ENCODE measurements at regions of chr6 and their contacts with region 1.

Region 1: DNA sequence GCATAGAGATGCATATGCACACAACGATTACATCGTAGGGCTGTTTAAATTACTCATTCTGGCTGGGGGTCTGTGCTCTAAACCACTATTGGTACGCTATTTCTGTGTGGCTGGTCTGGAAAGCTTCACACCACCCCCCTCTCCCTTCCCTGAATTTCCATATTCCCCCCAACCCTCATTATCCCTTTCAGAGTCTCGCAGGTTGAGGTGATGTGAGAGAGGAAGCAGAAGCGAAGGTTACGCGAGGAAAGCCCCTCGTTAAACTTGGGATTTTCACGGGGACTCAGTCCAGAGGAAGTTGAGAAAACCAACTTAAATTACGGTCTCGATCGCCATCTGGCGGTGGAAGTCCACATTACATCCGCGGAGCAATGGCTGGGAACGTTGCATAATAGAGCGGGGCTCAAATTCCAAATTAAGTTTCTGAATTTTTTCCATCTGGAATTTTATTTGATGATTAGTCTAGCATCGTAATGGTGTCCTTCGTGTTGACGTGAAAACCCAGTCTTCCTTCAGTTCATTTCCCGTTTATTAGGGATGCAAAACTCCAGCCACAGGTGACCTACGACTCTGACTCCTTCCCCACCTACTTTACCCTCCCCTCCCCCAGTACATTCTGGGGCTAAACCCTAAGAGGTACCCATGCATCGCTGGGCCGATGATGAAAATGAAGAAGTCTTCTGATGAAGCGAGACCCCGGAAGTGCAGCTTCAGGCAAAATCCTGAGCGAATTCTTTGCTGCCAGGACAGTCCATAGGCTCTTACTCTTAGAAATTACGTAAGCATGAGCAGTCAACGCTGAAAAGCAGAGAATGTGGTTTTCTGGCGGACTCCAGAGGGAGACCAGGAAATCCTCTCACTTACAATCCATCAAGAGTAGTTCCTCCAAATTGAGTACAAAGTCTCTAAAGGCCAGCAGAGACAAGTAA is 19.7 kb downstream of the HLA-DOB start:
- DNase-seq: peak; percentile 60 to 88 (median 81)
- ATAC-seq: peak; percentile 79
- H3K4me3 ChIP-seq: peak overlapping the region in 1 of 2 experiments; percentile 33
- H3K4me3 Mint-ChIP-seq: peak overlapping the region; percentile 64
- H3K27ac ChIP-seq: no peak overlapping the region
- H3K27ac Mint-ChIP-seq: no peak overlapping the region
- H3K4me1 ChIP-seq: peaks cover 17% of the 10 kb centered on the region
- H3K4me1 Mint-ChIP-seq: peaks cover 27% of the 10 kb centered on the region
- H3K27me3 ChIP-seq: peaks cover 0 to 6% of the 10 kb centered on the region in 2 experiments
- H3K27me3 Mint-ChIP-seq: peaks cover 36% of the 10 kb centered on the region
- CTCF ChIP-seq: peak; percentile 97

Region 2: GRCh38 chr6:31729515-31729978 is 1067.6 kb before region 1 on chr6:
- CTCF ChIA-PET with region 1: no interaction called
- POLR2A ChIA-PET with region 1: no interaction called
- intact Hi-C with region 1: no loop called
- DNase-seq: peak; percentile 60 to 89 (median 83)
- ATAC-seq: peak; percentile 69
- H3K4me3 ChIP-seq: peak overlapping the region; percentile 79 to 96
- H3K4me3 Mint-ChIP-seq: peak overlapping the region; percentile 97
- H3K27ac ChIP-seq: peak overlapping the region; percentile 11 to 58
- H3K27ac Mint-ChIP-seq: peak overlapping the region; percentile 89
- H3K4me1 ChIP-seq: peaks cover 35% of the 10 kb centered on the region
- H3K4me1 Mint-ChIP-seq: peaks cover 57% of the 10 kb centered on the region
- H3K27me3 ChIP-seq: no peaks in the 10 kb centered on the region
- H3K27me3 Mint-ChIP-seq: no peaks in the 10 kb centered on the region
- CTCF ChIP-seq: peak; percentile 91

Region 3: GRCh38 chr6:32047850-32048766 is 749.0 kb before region 1 on chr6:
- CTCF ChIA-PET with region 1: no interaction called
- POLR2A ChIA-PET with region 1: no interaction called
- intact Hi-C with region 1: loop called in 1 of 2 experiments (anchors 10 kb)
- DNase-seq: peak; percentile 39 to 81 (median 71)
- ATAC-seq: peak; percentile 78
- H3K4me3 ChIP-seq: no peak overlapping the region
- H3K4me3 Mint-ChIP-seq: peak overlapping the region; percentile 26
- H3K27ac ChIP-seq: no peak overlapping the region
- H3K27ac Mint-ChIP-seq: no peak overlapping the region
- H3K4me1 ChIP-seq: no peaks in the 10 kb centered on the region
- H3K4me1 Mint-ChIP-seq: peaks cover 4% of the 10 kb centered on the region
- H3K27me3 ChIP-seq: no peaks in the 10 kb centered on the region
- H3K27me3 Mint-ChIP-seq: no peaks in the 10 kb centered on the region
- CTCF ChIP-seq: peak; percentile 93

Region 4: DNA sequence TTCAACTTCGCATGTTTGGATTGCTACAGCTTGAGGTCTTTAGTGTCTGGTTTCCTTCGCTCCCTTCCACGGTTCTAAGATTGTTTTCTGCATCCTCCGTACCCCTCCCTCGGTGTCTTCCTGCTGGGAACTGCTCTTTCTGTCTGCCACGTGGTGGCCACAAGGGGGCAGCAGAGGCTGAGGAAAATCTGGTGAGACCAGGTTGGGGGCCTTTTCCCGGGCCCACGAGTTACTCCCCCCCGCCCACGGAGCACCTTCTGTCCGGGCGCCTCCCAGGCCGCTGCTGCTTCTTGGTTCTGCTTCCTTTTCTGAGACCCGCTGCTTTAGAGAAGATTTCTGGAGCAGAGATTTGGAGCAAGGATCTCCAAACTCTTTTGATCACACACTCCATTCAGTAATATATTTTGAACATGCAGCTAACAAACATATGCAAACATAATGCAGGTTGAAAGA is 552.1 kb before region 1 on chr6:
- CTCF ChIA-PET with region 1: interaction called, 3 read pairs
- POLR2A ChIA-PET with region 1: no interaction called
- intact Hi-C with region 1: loop called (anchors 2 to 10 kb)
- DNase-seq: peak; percentile 38 to 83 (median 75)
- ATAC-seq: peak; percentile 69
- H3K4me3 ChIP-seq: peak overlapping the region in 1 of 2 experiments; percentile 18
- H3K4me3 Mint-ChIP-seq: peak overlapping the region; percentile 44
- H3K27ac ChIP-seq: no peak overlapping the region
- H3K27ac Mint-ChIP-seq: no peak overlapping the region
- H3K4me1 ChIP-seq: peaks cover 5% of the 10 kb centered on the region
- H3K4me1 Mint-ChIP-seq: peaks cover 5% of the 10 kb centered on the region
- H3K27me3 ChIP-seq: no peaks in the 10 kb centered on the region
- H3K27me3 Mint-ChIP-seq: peaks cover 2% of the 10 kb centered on the region
- CTCF ChIP-seq: peak; percentile 94

Region 5: DNA sequence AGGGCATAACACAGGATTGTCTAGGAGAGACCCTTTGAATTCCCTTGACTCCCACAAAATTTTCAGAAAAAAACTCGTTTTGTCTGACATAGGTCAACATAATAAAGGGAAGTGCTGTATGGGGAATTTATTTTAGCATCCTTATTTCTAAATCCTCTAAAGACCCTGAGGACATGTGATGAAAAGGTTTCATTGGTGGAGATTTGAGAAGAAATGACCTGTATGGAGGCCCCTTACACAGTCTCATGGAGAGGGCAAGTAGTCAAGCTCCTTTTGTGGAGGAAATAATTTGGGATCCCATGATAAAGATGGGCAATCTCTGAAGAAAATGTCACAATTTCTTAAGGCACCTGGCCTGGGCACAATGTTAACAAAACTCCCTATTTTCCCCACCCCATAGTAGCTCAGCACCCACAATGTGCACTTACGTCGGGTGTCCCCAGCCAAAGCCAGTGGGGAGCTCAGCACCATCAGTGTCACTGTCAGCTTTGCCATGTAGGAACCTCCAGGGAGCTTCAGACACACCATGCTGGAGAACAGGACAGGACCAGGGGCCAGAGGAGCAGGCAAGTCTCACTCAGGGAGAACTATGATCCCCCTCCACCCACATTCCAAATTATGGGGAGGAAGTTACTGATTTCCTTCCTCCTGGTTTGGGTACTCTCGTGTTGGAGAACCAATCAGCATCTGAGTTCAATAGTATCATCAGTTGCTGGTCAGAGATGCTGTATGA is 267.2 kb before region 1 on chr6 and contains the start of gene HLA-DRB5:
- CTCF ChIA-PET with region 1: no interaction called
- POLR2A ChIA-PET with region 1: no interaction called
- intact Hi-C with region 1: no loop called
- DNase-seq: peak in 3 of 9 experiments; percentile 4 to 61 (median 51)
- ATAC-seq: peak; percentile 66
- H3K4me3 ChIP-seq: peak within 1 kb of the TSS in 1 of 2 experiments; percentile 50
- H3K4me3 Mint-ChIP-seq: peak within 1 kb of the TSS; percentile 78
- H3K27ac ChIP-seq: peak within 1 kb of the TSS in 1 of 2 experiments; percentile 56
- H3K27ac Mint-ChIP-seq: peak within 1 kb of the TSS; percentile 32
- H3K4me1 ChIP-seq: no peaks in the 10 kb centered on the region
- H3K4me1 Mint-ChIP-seq: peaks cover 5% of the 10 kb centered on the region
- H3K27me3 ChIP-seq: no peaks in the 10 kb centered on the region
- H3K27me3 Mint-ChIP-seq: peaks cover 4% of the 10 kb centered on the region
- CTCF ChIP-seq: no peak
- total RNA-seq, gene HLA-DRB5: 9.3 to 10.1 TPM

Region 6: DNA sequence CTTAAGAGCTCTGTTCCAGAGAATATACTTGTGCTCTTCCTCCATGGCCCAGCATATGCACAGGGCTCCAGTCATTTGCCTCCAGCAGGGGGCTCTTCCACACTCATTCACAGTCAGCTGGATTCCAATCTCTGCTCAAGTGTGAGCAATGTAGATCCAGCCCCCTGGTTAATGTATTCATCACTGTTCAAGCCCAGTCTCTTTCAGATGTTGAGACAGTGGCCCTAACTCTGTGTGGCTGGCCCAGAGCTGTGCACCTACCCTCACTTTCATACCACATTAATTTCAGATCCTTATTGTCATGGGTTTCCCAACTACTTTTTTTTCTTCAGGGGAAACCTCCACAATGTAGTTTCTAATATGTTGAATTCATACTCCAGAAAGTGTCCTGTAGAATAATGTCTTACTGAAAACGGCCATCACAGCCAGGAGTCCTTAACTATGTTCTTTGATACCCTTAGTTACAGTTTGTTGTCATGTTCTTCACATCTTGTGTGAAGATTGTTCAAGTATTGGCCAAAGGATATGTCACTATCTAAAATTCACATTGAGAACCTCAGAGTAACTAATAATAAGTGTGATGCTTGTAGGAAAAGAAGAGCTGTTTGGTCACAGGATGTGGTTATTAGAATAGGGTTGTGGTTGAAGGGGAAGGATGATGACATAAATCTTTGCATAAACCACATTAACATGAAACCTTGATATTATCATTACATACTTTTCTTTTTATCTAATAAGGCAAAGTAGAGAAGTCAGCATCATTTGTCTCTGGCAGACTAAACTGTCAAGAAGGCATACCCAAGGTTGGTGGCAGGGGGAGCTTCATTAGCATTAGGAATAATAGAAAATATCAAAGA is 174.3 kb before region 1 on chr6:
- CTCF ChIA-PET with region 1: no interaction called
- POLR2A ChIA-PET with region 1: no interaction called
- intact Hi-C with region 1: loop called in 1 of 2 experiments (anchors 10 kb)
- DNase-seq: peak; percentile 6 to 94 (median 44)
- ATAC-seq: peak; percentile 82
- H3K4me3 ChIP-seq: no peak overlapping the region
- H3K4me3 Mint-ChIP-seq: peak overlapping the region; percentile 6
- H3K27ac ChIP-seq: peak overlapping the region; percentile 60 to 89
- H3K27ac Mint-ChIP-seq: peak overlapping the region; percentile 85
- H3K4me1 ChIP-seq: peaks cover 38% of the 10 kb centered on the region
- H3K4me1 Mint-ChIP-seq: peaks cover 33% of the 10 kb centered on the region
- H3K27me3 ChIP-seq: no peaks in the 10 kb centered on the region
- H3K27me3 Mint-ChIP-seq: no peaks in the 10 kb centered on the region
- CTCF ChIP-seq: peak; percentile 47

Region 7: DNA sequence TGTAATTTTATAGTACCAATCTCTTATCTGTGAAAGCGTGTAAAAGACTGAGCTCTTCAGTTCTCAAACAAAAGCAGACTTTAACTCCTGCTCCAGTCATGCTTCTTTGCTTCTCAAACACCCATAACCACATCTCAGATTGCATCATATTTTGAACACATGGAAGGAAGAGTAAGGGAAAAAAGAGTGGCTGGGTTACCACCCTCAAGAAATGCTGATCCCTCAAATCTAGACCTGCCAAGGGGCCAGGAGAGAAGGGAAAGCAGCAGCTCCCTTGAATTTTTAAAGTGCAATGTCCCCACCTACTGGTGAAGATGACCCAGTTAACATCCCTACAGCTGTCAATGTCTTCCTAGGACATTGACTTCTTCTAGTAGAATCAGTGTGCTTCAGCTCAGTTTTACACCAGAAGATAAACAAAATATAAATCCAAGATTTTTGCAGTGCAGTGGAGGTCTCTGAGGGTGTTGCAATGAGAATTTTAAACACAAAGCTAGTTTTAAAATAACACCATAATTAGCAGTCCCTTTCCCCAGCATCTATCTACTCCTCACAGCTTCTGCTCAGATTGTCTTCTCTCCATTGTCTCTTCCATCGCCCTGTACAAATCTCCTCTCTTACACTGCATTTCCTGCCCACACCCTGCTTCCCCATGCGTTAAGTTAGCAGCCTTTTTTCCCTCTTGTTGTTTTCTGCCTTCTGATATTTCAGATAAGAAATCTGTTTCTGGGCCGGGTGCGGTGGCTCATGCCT is 11.2 kb before region 1 on chr6:
- CTCF ChIA-PET with region 1: interaction called, 15 read pairs
- POLR2A ChIA-PET with region 1: interaction called, 4 read pairs
- intact Hi-C with region 1: no loop called
- DNase-seq: peak in 5 of 9 experiments; percentile 19 to 66 (median 30)
- ATAC-seq: peak; percentile 52
- H3K4me3 ChIP-seq: no peak overlapping the region
- H3K4me3 Mint-ChIP-seq: no peak overlapping the region
- H3K27ac ChIP-seq: no peak overlapping the region
- H3K27ac Mint-ChIP-seq: no peak overlapping the region
- H3K4me1 ChIP-seq: no peaks in the 10 kb centered on the region
- H3K4me1 Mint-ChIP-seq: no peaks in the 10 kb centered on the region
- H3K27me3 ChIP-seq: peaks cover 0 to 7% of the 10 kb centered on the region in 2 experiments
- H3K27me3 Mint-ChIP-seq: peaks cover 35% of the 10 kb centered on the region
- CTCF ChIP-seq: peak; percentile 68

Region 8: DNA sequence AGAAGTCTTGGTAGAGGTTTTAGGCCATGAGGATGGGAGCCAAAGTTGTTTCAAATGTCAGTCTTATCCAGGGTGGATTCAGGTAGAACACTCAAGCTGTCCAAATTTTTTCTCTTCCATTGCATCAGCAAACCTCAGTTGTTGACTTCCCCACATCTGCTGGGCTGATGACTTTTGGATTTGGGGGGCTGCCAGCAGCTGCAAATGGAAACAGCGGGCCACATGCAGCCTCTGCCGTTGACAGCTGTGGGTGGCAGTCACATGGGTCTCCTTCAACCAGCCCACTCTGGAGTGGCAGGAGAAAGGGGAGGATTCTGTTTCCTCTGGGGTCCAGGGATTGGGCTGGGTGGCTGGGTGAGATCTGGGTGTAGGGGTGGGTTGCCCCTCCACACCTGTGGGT is 1012.5 kb after region 1 on chr6:
- CTCF ChIA-PET with region 1: no interaction called
- POLR2A ChIA-PET with region 1: no interaction called
- intact Hi-C with region 1: no loop called
- DNase-seq: no peak
- ATAC-seq: no peak
- H3K4me3 ChIP-seq: no peak overlapping the region
- H3K4me3 Mint-ChIP-seq: no peak overlapping the region
- H3K27ac ChIP-seq: no peak overlapping the region
- H3K27ac Mint-ChIP-seq: no peak overlapping the region
- H3K4me1 ChIP-seq: peaks cover 15% of the 10 kb centered on the region
- H3K4me1 Mint-ChIP-seq: peaks cover 25% of the 10 kb centered on the region
- H3K27me3 ChIP-seq: peaks cover 14 to 16% of the 10 kb centered on the region in 2 experiments
- H3K27me3 Mint-ChIP-seq: peaks cover 48% of the 10 kb centered on the region
- CTCF ChIP-seq: no peak

Measured in CD8-positive, alpha-beta T cell (primary cell).